HEK293T (cell line): ENCODE measurements at regions of chr3 and their contacts with region 1.

Region 1: GRCh38 chr3:48674505-48674904 is 11.2 kb downstream of the NCKIPSD start:
- DNase-seq: no peak

Region 2: DNA sequence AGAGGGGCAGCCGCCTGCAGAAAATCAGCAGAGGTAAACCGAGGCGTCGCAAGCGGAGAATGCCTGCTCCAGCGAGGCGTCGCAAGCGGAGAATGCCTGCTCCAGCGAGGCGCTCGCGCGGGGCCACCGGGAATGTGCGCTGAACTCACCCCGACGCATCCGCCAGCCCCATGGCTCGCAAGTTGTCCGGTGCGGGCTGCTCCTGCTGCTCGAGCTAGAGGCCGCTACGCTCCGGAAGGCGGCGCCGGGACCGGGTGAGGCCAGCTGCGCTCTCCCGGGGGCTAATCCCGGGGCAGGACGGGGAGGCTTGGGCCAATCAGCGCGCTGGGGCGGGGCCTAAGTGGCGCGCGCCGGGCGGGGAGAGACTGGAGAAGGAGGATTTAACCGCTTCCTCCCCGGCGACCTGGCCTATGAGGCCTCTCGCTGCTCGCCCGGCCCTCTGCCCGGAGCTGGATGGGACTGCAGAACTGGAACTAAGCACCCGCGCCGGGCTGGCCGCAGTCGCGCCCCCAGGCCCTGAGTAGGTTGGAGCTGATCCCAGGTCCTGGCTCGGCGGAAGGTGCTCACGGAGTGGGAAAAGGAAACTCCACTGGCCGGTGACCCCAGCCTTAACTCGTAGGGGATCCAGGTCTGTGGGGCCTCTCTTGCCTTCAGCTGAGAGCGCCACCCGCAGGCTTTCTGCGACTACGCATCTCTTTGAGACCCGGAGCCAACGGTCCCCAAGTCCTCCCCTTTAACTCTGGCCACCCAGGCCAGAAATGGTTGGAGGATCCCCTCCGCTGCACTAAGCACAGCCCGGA is 39.1 kb before region 1 on chr3 and contains the start of gene SLC26A6:
- CTCF ChIA-PET with region 1: no interaction called
- POLR2A ChIA-PET with region 1: no interaction called
- DNase-seq: peak; percentile 99

Region 3: GRCh38 chr3:48685602-48686511 is 11.4 kb after region 1 on chr3 and contains the start of gene NCKIPSD:
- CTCF ChIA-PET with region 1: interaction called, 4 read pairs
- POLR2A ChIA-PET with region 1: interaction called, 13 read pairs
- DNase-seq: peak; percentile 97